ENCODE measurements at regions of chr5 and their contacts with region 1.

Region 1: GRCh38 chr5:39547553-39548154 is 122.9 kb upstream of the DAB2 start:
- DNase-seq: peak; percentile 62
- H3K27ac ChIP-seq: no peak overlapping the region
- CTCF ChIP-seq: peak; percentile 85

Region 2: DNA sequence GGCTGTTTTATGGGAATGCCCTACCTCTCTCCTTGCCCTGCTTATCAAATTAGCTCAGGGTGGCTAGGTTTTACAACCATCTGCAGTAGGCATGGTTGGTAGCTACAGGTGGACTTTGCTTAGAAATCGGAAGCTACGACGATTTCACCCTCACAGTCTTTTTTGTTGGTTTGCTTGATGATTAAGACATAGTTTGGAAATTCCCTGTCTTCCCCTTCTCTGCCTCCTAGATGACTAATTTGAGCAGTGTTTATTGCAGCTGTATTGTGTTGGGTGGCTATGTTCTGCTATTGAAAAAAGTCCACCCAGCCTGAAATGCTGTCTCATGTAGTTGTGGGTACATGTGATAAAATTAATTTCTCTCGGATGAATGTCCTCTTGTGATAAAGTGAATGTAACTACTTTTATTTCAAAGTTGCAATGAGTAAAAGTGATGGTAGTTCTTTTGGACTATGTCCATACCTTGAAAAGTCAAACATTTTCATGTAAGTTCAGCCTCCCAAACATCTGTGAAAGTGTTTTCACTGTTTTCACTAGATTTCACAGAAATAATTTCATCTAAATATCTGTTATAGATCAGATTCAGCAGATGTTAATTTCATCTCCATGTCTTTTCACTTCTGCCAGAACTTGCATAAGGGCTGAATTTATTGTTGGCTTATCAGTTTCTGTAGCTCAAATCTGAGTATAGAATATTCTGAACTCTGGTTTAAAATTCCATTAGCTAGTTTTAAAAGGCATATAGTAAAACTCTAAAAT is 291.0 kb before region 1 on chr5:
- CTCF ChIA-PET with region 1: no interaction called
- POLR2A ChIA-PET with region 1: no interaction called
- DNase-seq: peak; percentile 88
- H3K27ac ChIP-seq: no peak overlapping the region
- CTCF ChIP-seq: no peak

Region 3: GRCh38 chr5:39376293-39376714 is 171.3 kb before region 1 on chr5:
- CTCF ChIA-PET with region 1: interaction called, 63 read pairs
- POLR2A ChIA-PET with region 1: no interaction called
- DNase-seq: peak; percentile 75
- H3K27ac ChIP-seq: no peak overlapping the region
- CTCF ChIP-seq: peak; percentile 92

Region 4: DNA sequence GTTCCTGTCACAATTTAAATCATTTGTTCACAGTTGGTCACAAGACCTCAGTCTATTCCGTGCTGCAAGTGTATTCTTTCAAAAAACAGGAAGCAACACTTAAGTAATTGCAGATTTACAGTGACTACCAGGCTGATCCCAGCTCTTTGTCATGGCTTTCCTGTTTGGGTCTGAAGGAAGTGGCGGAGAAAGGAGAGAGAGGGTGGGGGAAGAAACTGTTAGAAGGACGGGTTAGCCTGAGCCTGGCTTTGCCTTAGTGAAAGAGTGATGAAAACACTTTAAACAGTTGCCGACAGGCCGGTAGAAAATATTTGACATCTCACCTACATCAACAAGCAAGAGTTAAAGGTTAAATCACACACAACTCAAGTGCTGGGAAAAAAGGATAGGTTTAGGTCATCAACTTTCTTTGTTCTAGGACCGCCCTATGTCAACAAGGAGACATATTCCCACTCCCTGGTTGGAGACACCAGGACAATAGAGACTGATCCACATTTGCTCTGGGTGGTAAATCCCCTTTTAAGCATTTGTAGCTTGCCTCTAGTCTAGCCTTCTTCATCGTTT is 20.7 kb before region 1 on chr5:
- CTCF ChIA-PET with region 1: interaction called, 12 read pairs
- POLR2A ChIA-PET with region 1: no interaction called
- DNase-seq: no peak
- H3K27ac ChIP-seq: no peak overlapping the region
- CTCF ChIP-seq: no peak

Region 5: GRCh38 chr5:39558541-39558940 is 10.9 kb after region 1 on chr5:
- CTCF ChIA-PET with region 1: no interaction called
- POLR2A ChIA-PET with region 1: no interaction called
- DNase-seq: no peak
- H3K27ac ChIP-seq: no peak overlapping the region
- CTCF ChIP-seq: no peak

Region 6: GRCh38 chr5:39730011-39730410 is 182.4 kb after region 1 on chr5:
- CTCF ChIA-PET with region 1: no interaction called
- POLR2A ChIA-PET with region 1: no interaction called
- DNase-seq: no peak
- H3K27ac ChIP-seq: no peak overlapping the region
- CTCF ChIP-seq: no peak

Measured in RWPE1 (cell line).